Left colon (tissue), 2 donors: ENCODE measurements at regions of chr1 and their contacts with region 1.

Region 1: GRCh38 chr1:202716654-202717053 is 6.4 kb upstream of the SYT2 start:
- DNase-seq: no peak
- ATAC-seq: no peak

Region 2: DNA sequence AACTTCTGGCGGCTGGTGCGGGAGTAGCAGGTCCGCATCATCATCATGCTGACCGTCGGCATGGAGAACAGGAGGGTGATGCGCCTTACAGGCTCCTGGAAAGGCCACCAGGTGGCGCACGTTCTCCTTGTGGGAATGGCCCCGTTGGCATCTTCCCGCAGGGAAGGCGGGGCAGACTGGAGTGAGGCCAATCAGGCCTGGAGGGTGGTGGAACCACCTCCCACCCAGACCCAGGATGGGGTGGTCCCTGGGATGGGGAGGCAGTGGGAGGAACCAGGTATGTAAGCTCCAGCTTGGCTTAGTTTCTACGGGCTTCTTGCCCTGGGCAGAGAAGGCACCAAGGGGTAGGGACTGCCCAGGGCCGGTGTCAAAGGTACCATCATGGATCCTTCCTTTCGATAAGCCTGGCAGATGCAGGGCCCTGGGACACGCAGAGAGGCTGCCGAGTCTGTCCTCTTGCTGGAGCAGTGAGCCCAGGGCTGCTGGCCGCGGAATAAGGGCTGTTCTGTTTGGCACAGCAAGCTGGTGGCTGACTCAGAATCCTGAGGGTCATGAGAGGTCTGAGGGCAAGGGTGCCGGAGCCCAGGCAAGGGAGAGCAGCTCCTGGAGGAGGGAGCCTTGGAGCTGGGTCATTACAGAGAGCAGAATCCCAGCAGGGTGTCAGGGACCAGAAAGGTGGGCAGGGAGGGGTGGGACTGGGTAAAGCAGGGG is 531.7 kb before region 1 on chr1:
- intact Hi-C with region 1: loop called in 1 of 2 experiments (anchors 5 kb)
- DNase-seq: peak; percentile 77 to 93
- ATAC-seq: peak; percentile 67

Region 3: DNA sequence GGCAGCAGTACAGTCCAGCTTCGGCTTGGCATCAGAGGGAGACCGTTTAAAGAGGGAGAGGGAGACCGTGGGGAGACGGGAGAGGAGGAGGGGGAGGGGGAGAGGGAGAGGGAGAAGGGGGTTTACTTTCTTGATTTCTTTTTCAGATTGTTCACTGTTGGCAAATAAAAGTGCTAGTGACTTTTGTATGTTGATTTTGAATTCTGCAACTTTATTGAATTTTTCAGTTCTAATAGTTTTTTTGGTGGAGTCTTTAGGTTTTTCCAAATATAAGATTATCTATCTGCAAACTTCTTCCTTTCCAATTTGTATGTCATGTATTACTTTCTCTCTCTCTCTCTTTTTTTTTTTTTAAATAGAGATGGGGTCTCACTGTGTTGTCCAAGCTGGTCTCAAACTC is 264.2 kb before region 1 on chr1:
- intact Hi-C with region 1: no loop called
- DNase-seq: no peak
- ATAC-seq: no peak

Region 4: DNA sequence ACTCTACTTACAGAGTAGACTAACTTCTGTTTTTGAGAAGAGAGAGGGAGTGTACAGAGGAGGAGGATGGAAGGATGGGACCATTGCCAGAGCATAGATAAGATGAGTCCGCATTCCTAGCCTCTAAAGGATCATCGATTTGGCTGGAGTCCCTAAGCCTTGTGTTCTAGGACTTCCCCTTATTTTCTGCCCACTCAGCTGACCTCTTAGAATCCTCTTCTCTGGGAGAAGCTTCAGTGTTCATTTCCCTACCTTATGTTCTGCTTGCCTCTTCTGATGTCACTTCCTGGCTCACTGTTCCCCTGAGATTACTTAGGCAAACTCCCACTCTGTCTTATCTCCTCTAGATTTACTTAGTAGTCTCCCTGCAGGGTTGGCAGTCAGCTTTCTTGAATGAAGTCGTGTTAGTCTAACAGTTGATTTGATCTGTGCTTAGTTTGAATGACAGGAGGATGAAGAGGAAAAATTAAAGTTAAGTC is 163.1 kb before region 1 on chr1:
- intact Hi-C with region 1: no loop called
- DNase-seq: no peak
- ATAC-seq: peak; percentile 44

Region 5: GRCh38 chr1:202888531-202889360 is 172.1 kb after region 1 on chr1 and contains the start of gene RABIF:
- intact Hi-C with region 1: no loop called
- DNase-seq: peak; percentile 95 to 97
- ATAC-seq: peak; percentile 94
- total RNA-seq, gene RABIF: 12.0 to 14.3 TPM